Left lung (tissue), 14 donors: ENCODE measurements at regions of chr5 and their contacts with region 1.

Region 1: GRCh38 chr5:17481378-17481777 is 16.7 kb upstream of the TAF11L2 start:
- DNase-seq: no peak
- ATAC-seq: no peak
- H3K4me3 ChIP-seq: no peak overlapping the region
- H3K27ac ChIP-seq: no peak overlapping the region
- H3K4me1 ChIP-seq: no peaks in the 10 kb centered on the region
- H3K27me3 ChIP-seq: no peaks in the 10 kb centered on the region
- CTCF ChIP-seq: no peak

Region 2: GRCh38 chr5:17620627-17621026 is 139.2 kb after region 1 on chr5:
- intact Hi-C with region 1: no loop called
- DNase-seq: peak in 1 of 4 donors; percentile 71
- ATAC-seq: no peak
- H3K4me3 ChIP-seq: no peak overlapping the region
- H3K27ac ChIP-seq: no peak overlapping the region
- H3K4me1 ChIP-seq: no peaks in the 10 kb centered on the region
- H3K27me3 ChIP-seq: no peaks in the 10 kb centered on the region
- CTCF ChIP-seq: no peak

Region 3: GRCh38 chr5:17976404-17976803 is 495.0 kb after region 1 on chr5:
- intact Hi-C with region 1: no loop called
- DNase-seq: no peak
- ATAC-seq: no peak
- H3K4me3 ChIP-seq: no peak overlapping the region
- H3K27ac ChIP-seq: no peak overlapping the region
- H3K4me1 ChIP-seq: no peaks in the 10 kb centered on the region
- H3K27me3 ChIP-seq: no peaks in the 10 kb centered on the region
- CTCF ChIP-seq: no peak

Region 4: DNA sequence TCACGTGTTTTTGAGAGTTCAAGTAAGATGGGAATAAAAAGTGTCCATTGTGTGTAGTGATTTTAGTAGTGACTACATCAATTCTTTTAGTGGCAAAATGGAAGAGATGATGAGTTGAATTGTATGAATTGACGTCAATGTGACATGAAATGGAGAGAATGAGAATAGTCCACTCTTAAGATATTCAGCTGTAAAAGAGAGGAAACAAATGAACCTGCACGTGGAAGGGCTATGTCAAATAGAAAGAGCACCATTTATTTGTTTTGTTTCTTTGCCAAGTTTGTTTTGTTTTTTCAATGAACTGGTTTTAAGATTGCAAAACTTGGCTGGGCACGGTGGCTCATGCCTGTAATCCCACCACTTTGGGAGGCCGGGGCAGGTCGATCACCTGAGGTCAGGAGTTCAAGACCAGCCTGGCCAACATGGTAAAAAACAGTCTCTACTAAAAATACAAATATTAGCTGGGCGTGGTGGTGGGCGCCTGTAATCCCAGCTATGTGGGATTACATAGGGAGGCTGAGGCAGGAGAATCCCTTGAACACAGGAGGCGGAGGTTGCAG is 606.7 kb after region 1 on chr5:
- intact Hi-C with region 1: loop called in 1 of 2 experiments (anchors 10 kb)
- DNase-seq: no peak
- ATAC-seq: no peak
- H3K4me3 ChIP-seq: no peak overlapping the region
- H3K27ac ChIP-seq: no peak overlapping the region
- H3K4me1 ChIP-seq: no peaks in the 10 kb centered on the region
- H3K27me3 ChIP-seq: no peaks in the 10 kb centered on the region
- CTCF ChIP-seq: no peak